K562 (cell line): ENCODE measurements at regions of chr1 and their contacts with region 1.

Region 1: GRCh38 chr1:34786521-34787325 is 5.7 kb downstream of the GJB3 start:
- DNase-seq: peak; percentile 75 to 85 (median 78)
- ATAC-seq: peak; percentile 90
- H3K4me3 ChIP-seq: no peak overlapping the region
- H3K27ac ChIP-seq: no peak overlapping the region
- H3K4me1 ChIP-seq: peaks cover 0 to 8% of the 10 kb centered on the region in 2 experiments; a peak in 1 of 5 replicates
- H3K27me3 ChIP-seq: peaks cover 17 to 74% of the 10 kb centered on the region in 2 experiments; a peak in 4 of 5 replicates
- CTCF ChIP-seq: peak; percentile 93 to 97 (median 95)
- EP300 ChIP-seq: no peak
- POLR2A ChIP-seq: no peak
- RAD21 ChIP-seq: peak; percentile 88 to 97

Region 2: DNA sequence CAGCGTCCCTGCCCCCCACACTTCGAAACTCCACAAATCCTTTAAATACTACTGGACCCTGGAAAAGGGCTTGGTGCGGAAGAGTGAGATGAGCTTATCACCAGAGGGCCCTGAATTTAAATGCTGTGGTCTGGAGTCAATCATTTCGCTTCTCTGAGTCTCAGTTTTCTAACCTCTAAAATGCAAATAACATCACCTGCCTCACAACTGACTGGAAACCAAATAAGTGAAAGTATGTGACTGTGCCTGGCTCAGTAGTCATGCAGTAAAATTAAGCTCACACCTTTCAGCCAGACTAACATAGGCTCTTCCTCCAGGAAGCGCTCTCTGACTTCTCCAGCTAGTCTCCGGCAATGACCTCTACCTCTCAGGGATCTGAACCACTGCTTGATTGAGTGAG is 10.3 kb after region 1 on chr1:
- CTCF ChIA-PET with region 1: no interaction called
- POLR2A ChIA-PET with region 1: no interaction called
- in situ Hi-C with region 1: no loop called
- intact Hi-C with region 1: no loop called
- DNase-seq: peak in 1 of 4 experiments; percentile 3
- ATAC-seq: peak; percentile 32; the same call in 1 of the 3 replicates
- H3K4me3 ChIP-seq: no peak overlapping the region
- H3K27ac ChIP-seq: no peak overlapping the region
- H3K4me1 ChIP-seq: peaks cover 0 to 3% of the 10 kb centered on the region in 2 experiments; a peak in 1 of 5 replicates
- H3K27me3 ChIP-seq: peaks cover 36 to 67% of the 10 kb centered on the region in 2 experiments
- CTCF ChIP-seq: peak in 1 of 3 experiments; percentile 10; a peak in 1 of 6 replicates
- EP300 ChIP-seq: no peak
- POLR2A ChIP-seq: no peak
- RAD21 ChIP-seq: peak in 1 of 2 experiments; percentile 26; a peak in 1 of 4 replicates

Region 3: GRCh38 chr1:34822202-34822601 is 35.5 kb after region 1 on chr1:
- CTCF ChIA-PET with region 1: no interaction called
- POLR2A ChIA-PET with region 1: no interaction called
- in situ Hi-C with region 1: no loop called
- intact Hi-C with region 1: no loop called
- DNase-seq: no peak
- ATAC-seq: no peak
- H3K4me3 ChIP-seq: no peak overlapping the region
- H3K27ac ChIP-seq: no peak overlapping the region
- H3K4me1 ChIP-seq: peaks cover 0 to 7% of the 10 kb centered on the region in 2 experiments; a peak in 2 of 5 replicates
- H3K27me3 ChIP-seq: peaks cover 0 to 4% of the 10 kb centered on the region in 2 experiments; a peak in 3 of 5 replicates
- CTCF ChIP-seq: no peak
- EP300 ChIP-seq: no peak
- POLR2A ChIP-seq: no peak
- RAD21 ChIP-seq: no peak

Region 4: GRCh38 chr1:34845131-34845901 is 58.6 kb after region 1 on chr1:
- CTCF ChIA-PET with region 1: interaction called, 3 read pairs
- POLR2A ChIA-PET with region 1: interaction called, 3 read pairs
- in situ Hi-C with region 1: loop called (anchors 5 kb)
- intact Hi-C with region 1: loop called (anchors 1 kb)
- DNase-seq: peak; percentile 69 to 92 (median 82)
- ATAC-seq: peak; percentile 90
- H3K4me3 ChIP-seq: no peak overlapping the region
- H3K27ac ChIP-seq: peak overlapping the region; percentile 61
- H3K4me1 ChIP-seq: peaks cover 38 to 56% of the 10 kb centered on the region in 2 experiments
- H3K27me3 ChIP-seq: no peaks in the 10 kb centered on the region
- CTCF ChIP-seq: peak; percentile 38 to 61 (median 52); a peak in 4 of 6 replicates
- EP300 ChIP-seq: peak; percentile 53; the same call in 1 of the 2 replicates
- POLR2A ChIP-seq: no peak
- RAD21 ChIP-seq: peak; percentile 26 to 37; a peak in 2 of 4 replicates

Region 5: GRCh38 chr1:34852677-34853217 is 66.0 kb after region 1 on chr1:
- CTCF ChIA-PET with region 1: interaction called, 45 read pairs
- POLR2A ChIA-PET with region 1: interaction called, 3 read pairs
- in situ Hi-C with region 1: loop called (anchors 5 kb)
- intact Hi-C with region 1: loop called (anchors 1 kb)
- DNase-seq: peak; percentile 92 to 96 (median 94)
- ATAC-seq: peak; percentile 100
- H3K4me3 ChIP-seq: no peak overlapping the region
- H3K27ac ChIP-seq: no peak overlapping the region
- H3K4me1 ChIP-seq: peaks cover 0 to 2% of the 10 kb centered on the region in 2 experiments; a peak in 2 of 5 replicates
- H3K27me3 ChIP-seq: no peaks in the 10 kb centered on the region
- CTCF ChIP-seq: peak; percentile 98 to 100 (median 99)
- EP300 ChIP-seq: peak; percentile 49; the same call in 1 of the 2 replicates
- POLR2A ChIP-seq: no peak; the same call in 1 of the 2 replicates
- RAD21 ChIP-seq: peak; percentile 97 to 98

Region 6: GRCh38 chr1:34865981-34866761 is 79.4 kb after region 1 on chr1:
- CTCF ChIA-PET with region 1: interaction called, 15 read pairs
- POLR2A ChIA-PET with region 1: no interaction called
- in situ Hi-C with region 1: no loop called
- intact Hi-C with region 1: no loop called
- DNase-seq: peak; percentile 83 to 92 (median 86)
- ATAC-seq: peak; percentile 87
- H3K4me3 ChIP-seq: peak overlapping the region; percentile 45
- H3K27ac ChIP-seq: peak overlapping the region; percentile 29; the same call in 1 of the 3 replicates
- H3K4me1 ChIP-seq: peaks cover 0 to 27% of the 10 kb centered on the region in 2 experiments; a peak in 4 of 5 replicates
- H3K27me3 ChIP-seq: peaks cover 27 to 41% of the 10 kb centered on the region in 2 experiments
- CTCF ChIP-seq: peak; percentile 92 to 99 (median 93)
- EP300 ChIP-seq: no peak
- POLR2A ChIP-seq: 0 out of 2 replicates have a peak, but pooled peaks have one; percentile 39
- RAD21 ChIP-seq: peak; percentile 45 to 76

Region 7: DNA sequence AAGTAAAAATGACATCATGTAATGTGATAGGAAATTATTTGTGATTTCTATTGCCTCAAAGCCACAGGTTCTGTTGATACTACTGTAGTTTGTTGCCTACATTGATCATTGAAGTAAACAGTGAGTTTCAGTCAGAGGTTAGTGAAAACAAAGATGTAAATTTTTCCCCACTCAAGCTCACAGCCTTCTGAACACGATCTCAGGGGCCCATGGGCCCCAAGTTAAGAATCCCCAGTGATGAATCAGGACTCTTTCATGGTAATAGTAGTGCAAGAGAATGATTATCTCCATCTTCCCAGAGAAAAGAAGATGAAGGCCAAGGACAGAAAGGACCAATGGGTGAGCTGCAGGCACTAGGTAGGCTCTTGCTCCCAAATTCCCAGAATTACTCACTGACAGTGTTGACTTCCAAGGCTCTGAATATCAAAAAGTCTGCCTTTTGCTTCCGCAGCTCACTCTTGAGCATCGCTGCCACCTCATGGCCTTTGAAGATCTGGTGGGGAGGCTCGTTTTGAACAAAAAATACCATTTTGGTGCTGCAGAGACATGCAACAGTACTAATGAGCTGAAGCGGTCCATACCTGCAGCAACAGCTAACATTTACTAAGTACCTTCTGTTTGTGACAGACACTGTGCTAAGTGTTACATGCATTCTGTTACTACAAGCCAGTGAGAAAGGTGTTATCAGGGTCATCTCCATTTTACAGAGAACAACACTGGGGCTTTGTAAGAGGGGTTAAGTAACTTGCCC is 657.2 kb after region 1 on chr1:
- CTCF ChIA-PET with region 1: interaction called, 3 read pairs
- POLR2A ChIA-PET with region 1: no interaction called
- in situ Hi-C with region 1: no loop called
- intact Hi-C with region 1: loop called (anchors 5 kb)
- DNase-seq: peak in 2 of 4 experiments; percentile 30 to 36
- ATAC-seq: peak; percentile 68; the same call in 2 of the 3 replicates
- H3K4me3 ChIP-seq: no peak overlapping the region
- H3K27ac ChIP-seq: no peak overlapping the region
- H3K4me1 ChIP-seq: no peaks in the 10 kb centered on the region
- H3K27me3 ChIP-seq: no peaks in the 10 kb centered on the region
- CTCF ChIP-seq: peak; percentile 43 to 65 (median 63)
- EP300 ChIP-seq: no peak
- POLR2A ChIP-seq: no peak
- RAD21 ChIP-seq: peak; percentile 22 to 72; a peak in 2 of 4 replicates